HCT116 (cell line): ENCODE measurements at regions of chr6 and their contacts with region 1.

Region 1: DNA sequence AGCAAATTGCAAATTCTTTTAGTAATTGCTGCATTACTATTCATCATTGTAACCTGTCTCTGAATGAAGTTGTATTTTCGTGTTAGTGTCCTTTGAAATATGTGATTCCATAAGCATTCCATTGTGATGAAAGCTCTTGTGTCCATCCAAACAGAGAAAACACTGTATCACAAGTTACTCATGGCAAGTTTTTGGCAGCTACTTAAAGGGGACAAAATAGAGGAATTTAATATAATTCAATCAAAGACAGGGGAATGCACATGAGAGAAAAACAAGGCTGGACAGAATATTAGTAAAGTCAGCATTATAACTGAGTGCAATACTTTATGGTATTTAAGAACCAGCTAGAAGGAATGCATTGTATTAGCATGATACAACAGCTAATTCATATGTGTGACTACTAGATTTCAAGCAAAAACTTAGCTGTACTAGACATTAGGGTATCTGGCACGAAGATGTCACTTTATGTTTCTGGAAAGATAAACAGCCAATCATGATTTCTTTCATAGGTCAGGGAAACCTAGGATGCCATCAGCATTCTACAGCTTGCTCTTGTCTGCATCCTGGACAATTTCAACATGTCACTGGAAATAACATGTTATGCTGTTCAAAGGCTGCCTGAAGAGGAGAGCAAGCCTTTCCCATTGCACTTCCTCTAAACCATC is 270.6 kb upstream of the MARCKS start:
- DNase-seq: no peak
- ATAC-seq: no peak
- H3K4me3 ChIP-seq: no peak overlapping the region
- H3K27ac ChIP-seq: no peak overlapping the region
- H3K4me1 ChIP-seq: peaks cover 0 to 3% of the 10 kb centered on the region in 2 experiments; a peak in 1 of 4 replicates
- H3K27me3 ChIP-seq: no peaks in the 10 kb centered on the region
- CTCF ChIP-seq: no peak
- POLR2A ChIP-seq: no peak
- RAD21 ChIP-seq: no peak

Region 2: DNA sequence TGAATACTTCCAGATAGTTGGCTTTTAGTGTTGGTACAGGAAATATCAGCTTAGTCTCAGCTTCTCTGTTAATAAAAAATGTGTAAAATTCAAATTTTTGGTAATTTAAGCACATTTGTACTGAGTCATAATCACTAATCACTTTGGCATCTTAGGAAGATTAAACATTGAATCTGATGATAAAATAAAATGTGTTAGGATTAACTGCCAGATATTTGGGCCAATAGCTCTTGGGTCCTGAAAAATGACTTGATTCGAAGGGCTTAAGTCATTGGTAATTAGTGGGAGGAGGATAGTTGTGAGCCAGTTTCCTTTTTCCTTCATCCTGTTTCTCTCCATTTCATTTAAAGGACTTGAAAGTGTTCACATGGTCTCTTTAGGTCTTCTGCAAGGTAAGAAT is 813.4 kb before region 1 on chr6:
- CTCF ChIA-PET with region 1: no interaction called
- POLR2A ChIA-PET with region 1: no interaction called
- RAD21 ChIA-PET with region 1: no interaction called
- intact Hi-C with region 1: loop called (anchors 10 kb)
- DNase-seq: no peak
- ATAC-seq: no peak
- H3K4me3 ChIP-seq: no peak overlapping the region
- H3K27ac ChIP-seq: no peak overlapping the region
- H3K4me1 ChIP-seq: no peaks in the 10 kb centered on the region
- H3K27me3 ChIP-seq: no peaks in the 10 kb centered on the region
- CTCF ChIP-seq: no peak
- POLR2A ChIP-seq: no peak
- RAD21 ChIP-seq: no peak

Region 3: GRCh38 chr6:113299531-113299930 is 287.0 kb before region 1 on chr6:
- CTCF ChIA-PET with region 1: no interaction called
- POLR2A ChIA-PET with region 1: no interaction called
- RAD21 ChIA-PET with region 1: no interaction called
- intact Hi-C with region 1: no loop called
- DNase-seq: no peak
- ATAC-seq: no peak
- H3K4me3 ChIP-seq: no peak overlapping the region
- H3K27ac ChIP-seq: no peak overlapping the region
- H3K4me1 ChIP-seq: no peaks in the 10 kb centered on the region
- H3K27me3 ChIP-seq: no peaks in the 10 kb centered on the region
- CTCF ChIP-seq: no peak
- POLR2A ChIP-seq: no peak
- RAD21 ChIP-seq: no peak

Region 4: DNA sequence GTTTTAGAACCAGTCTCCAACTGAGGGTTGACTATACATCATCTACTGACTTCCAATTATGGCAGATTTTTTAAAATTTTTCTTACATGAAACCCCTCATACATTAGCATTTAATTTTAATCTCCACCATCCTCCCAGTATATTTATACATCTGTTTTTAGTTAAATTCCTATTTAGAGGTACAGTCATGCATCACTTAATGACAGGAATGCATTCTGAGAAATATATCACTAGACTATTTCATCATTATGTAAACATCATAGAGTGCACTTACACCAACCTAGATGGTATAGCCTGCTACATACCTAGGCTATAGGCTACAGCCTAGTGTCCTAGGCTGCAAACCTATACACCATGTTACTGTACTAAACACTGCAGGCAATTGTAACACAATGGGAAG is 46.1 kb before region 1 on chr6:
- CTCF ChIA-PET with region 1: no interaction called
- POLR2A ChIA-PET with region 1: no interaction called
- RAD21 ChIA-PET with region 1: no interaction called
- intact Hi-C with region 1: no loop called
- DNase-seq: no peak
- ATAC-seq: no peak
- H3K4me3 ChIP-seq: no peak overlapping the region
- H3K27ac ChIP-seq: no peak overlapping the region
- H3K4me1 ChIP-seq: no peaks in the 10 kb centered on the region
- H3K27me3 ChIP-seq: no peaks in the 10 kb centered on the region
- CTCF ChIP-seq: no peak
- POLR2A ChIP-seq: no peak
- RAD21 ChIP-seq: no peak

Region 5: GRCh38 chr6:113642714-113643406 is 56.3 kb after region 1 on chr6:
- CTCF ChIA-PET with region 1: no interaction called
- POLR2A ChIA-PET with region 1: no interaction called
- RAD21 ChIA-PET with region 1: no interaction called
- intact Hi-C with region 1: no loop called
- DNase-seq: no peak
- ATAC-seq: 0 out of 2 replicates have a peak, but pooled peaks have one; percentile 22
- H3K4me3 ChIP-seq: no peak overlapping the region
- H3K27ac ChIP-seq: no peak overlapping the region
- H3K4me1 ChIP-seq: peaks cover 17 to 29% of the 10 kb centered on the region in 2 experiments; a peak in 3 of 4 replicates
- H3K27me3 ChIP-seq: no peaks in the 10 kb centered on the region
- CTCF ChIP-seq: no peak
- POLR2A ChIP-seq: no peak
- RAD21 ChIP-seq: no peak

Region 6: GRCh38 chr6:113862112-113862511 is 275.6 kb after region 1 on chr6:
- CTCF ChIA-PET with region 1: no interaction called
- POLR2A ChIA-PET with region 1: no interaction called
- RAD21 ChIA-PET with region 1: no interaction called
- intact Hi-C with region 1: no loop called
- DNase-seq: no peak
- ATAC-seq: no peak
- H3K4me3 ChIP-seq: no peak overlapping the region
- H3K27ac ChIP-seq: no peak overlapping the region
- H3K4me1 ChIP-seq: peaks cover 0 to 5% of the 10 kb centered on the region in 2 experiments; a peak in 1 of 4 replicates
- H3K27me3 ChIP-seq: no peaks in the 10 kb centered on the region
- CTCF ChIP-seq: no peak
- POLR2A ChIP-seq: no peak
- RAD21 ChIP-seq: no peak